ENCODE measurements at regions of chr3 and their contacts with region 1.

Region 1: DNA sequence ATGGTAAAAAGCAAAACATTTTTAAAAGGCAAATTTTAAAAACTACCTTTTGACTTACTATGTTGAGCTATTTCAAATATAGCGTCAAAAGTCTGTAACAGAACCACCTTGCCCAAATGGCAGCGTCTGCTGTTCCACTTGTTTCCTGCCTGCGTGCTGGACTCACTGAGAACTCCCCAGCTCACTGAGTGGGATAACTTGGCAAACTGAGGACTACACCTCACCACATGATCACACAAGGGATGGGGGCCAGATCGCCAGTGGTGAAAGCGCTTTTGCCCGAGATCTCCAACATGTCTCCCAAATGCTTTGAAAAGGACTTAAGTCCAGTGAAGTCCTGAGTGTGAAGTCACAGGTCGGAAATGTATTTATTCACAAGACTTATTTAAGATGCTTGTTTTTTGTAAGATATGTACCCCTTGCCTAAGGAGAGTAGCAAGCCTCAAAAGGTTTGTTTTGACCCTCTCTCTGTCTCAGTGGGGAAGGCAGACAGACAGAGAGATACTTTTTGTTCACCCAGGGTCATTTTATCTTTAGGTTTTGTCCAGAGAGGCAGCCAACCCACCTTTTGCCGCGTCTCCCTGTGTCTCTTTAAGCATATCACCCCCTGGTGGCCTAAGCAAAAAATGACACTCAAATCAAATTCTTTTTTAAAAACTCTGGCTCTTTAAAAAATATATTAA is 192.6 kb downstream of the PDZRN3 start:
- DNase-seq: peak in 2 of 5 donors; percentile 63 to 79
- H3K4me3 ChIP-seq: peak overlapping the region in 1 of 3 donors; percentile 3
- H3K27ac ChIP-seq: no peak overlapping the region
- H3K4me1 ChIP-seq: peaks cover 7 to 12% (median 9%) of the 10 kb centered on the region in 3 donors
- H3K27me3 ChIP-seq: no peaks in the 10 kb centered on the region
- CTCF ChIP-seq: peak; percentile 57

Region 2: GRCh38 chr3:73100741-73101559 is 331.2 kb before region 1 on chr3:
- intact Hi-C with region 1: loop called (anchors 5 kb)
- DNase-seq: peak in 4 of 5 donors; percentile 89 to 95 (median 92)
- H3K4me3 ChIP-seq: no peak overlapping the region
- H3K27ac ChIP-seq: no peak overlapping the region
- H3K4me1 ChIP-seq: no peaks in the 10 kb centered on the region
- H3K27me3 ChIP-seq: no peaks in the 10 kb centered on the region
- CTCF ChIP-seq: peak; percentile 96